ENCODE measurements at regions of chr2 and their contacts with region 1.

Region 1: DNA sequence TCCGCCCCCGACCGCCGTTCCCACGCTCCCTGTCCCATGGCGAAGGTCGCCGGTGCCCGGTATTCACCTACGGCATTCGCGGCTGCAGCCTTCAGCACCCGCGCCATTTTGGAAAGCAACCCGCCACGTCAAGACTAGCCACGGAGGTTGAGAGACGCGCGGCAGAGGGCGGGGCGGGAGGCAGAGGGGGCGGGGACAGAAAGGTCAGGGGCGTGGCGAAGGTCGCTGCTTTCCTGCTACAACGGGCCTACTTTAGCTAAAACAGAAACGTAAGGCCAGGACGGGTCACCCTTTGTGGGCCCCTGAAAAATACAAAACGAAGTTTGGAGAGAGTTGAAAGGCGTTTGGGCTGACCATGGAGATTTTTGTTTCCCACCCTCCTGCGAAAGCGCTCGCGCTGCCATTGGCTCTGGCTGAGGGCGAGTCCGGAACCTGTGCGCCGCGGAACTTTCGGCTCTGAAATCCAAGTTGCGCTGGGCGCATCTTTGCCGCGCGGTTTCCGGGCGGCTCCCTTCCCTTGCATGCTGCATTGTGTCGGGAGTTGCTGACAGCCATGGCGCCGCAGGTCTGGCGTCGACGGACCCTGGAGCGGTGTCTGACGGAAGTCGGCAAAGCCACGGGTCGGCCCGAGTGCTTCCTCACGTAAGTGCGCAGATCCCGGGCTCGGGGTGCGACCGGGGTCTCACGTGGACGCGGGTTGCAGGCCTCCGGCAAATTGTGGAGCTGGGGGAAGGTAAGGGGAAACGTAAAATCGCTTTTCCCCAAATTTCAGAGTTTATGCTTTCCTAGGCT is at the starts of genes MCEE and MPHOSPH10:
- DNase-seq: peak; percentile 85 to 94 (median 89)
- H3K4me3 ChIP-seq: peak within 1 kb of the TSS; percentile 97
- H3K27ac ChIP-seq: peak within 1 kb of the TSS; percentile 74 to 91
- H3K4me1 ChIP-seq: peaks cover 10% of the 10 kb centered on the region
- H3K27me3 ChIP-seq: no peaks in the 10 kb centered on the region
- CTCF ChIP-seq: no peak
- EP300 ChIP-seq: no peak
- POLR2A ChIP-seq: peak; percentile 52
- total RNA-seq, gene MCEE: 10.7 to 22.0 (median 17.3) TPM
- total RNA-seq, gene MPHOSPH10: 19.9 to 38.8 (median 28.9) TPM

Region 2: DNA sequence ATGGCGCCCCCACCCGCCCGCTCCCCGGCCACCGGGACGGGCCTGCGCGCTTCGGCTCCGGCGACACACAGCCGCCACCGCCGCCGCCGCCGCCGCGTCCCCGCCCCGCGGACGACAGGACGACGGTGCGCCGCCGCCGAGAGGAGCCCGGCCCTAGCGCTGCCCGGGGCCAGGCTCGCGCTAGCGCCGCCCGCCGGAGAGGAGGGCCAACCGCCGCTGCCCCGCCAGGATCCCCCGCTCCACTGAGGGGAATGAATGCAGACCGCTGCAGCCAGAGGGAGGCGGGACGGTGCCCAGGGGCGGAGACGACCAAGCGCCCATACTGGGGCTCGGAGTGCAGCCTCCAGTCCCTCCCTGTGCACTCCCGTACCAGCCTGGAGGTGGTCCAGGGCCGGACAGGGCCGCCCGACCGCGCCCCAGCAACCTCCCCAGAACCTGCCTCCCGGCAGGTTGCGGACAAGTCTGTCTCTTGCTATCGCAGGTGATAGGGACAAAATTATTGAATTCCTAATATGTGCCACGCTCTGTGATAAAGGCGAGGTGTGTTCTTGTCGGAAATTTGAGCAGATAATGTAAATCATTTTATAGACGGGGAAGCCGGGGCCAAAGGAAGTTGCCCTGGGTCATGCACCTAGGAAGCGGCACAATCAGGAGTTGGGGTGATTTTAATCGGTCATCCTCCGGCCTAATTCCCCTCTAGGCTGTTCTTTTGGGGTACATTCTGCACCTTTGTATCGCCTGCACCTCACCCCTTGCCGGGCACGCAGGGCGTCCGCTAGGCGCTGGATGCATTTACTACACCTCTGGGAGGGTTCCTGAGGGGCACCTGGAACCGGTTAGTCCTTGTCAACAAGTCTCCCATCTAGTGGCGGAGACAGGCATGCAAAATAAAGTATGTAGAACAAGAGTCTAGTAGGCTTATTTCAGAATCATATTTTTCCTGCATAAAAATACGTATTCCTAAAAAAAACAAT is 135.3 kb before region 1 on chr2 and contains the start of gene TEX261:
- intact Hi-C with region 1: loop called in 1 of 4 experiments (anchors 10 kb)
- DNase-seq: peak; percentile 74 to 91 (median 84)
- H3K4me3 ChIP-seq: peak within 1 kb of the TSS; percentile 99
- H3K27ac ChIP-seq: peak within 1 kb of the TSS; percentile 71 to 90
- H3K4me1 ChIP-seq: peaks cover 9% of the 10 kb centered on the region
- H3K27me3 ChIP-seq: no peaks in the 10 kb centered on the region
- CTCF ChIP-seq: peak in 2 of 3 donors; percentile 70 to 78
- EP300 ChIP-seq: no peak
- POLR2A ChIP-seq: peak; percentile 35
- total RNA-seq, gene TEX261: 21.6 to 62.9 (median 57.3) TPM